ENCODE measurements at regions of chr7 and their contacts with region 1.

Region 1: DNA sequence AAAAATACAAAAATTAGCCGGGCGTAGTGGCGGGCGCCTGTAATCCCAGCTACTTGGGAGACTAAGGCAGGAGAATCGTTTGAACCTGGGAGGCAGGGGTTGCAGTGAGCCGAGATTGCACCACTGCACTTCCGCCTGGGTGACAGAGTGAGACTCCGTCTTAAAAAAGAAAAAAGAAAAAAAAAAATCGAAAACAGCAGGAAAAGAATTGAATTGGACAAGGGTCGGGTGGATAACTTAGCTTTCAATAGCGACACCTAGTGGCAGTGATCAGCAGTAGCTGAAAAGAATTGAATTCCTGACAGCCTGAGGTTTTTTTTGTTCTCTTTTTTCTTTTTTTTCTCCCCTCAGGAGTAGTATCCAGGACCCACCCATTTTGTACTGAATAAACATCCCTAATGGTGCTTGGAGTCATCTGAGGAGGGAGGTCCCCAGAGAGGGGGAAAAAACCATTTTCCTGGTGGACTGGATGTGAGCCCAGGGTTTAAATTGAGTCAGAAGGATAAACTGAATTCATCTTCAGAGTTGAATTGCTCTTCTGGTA is 55.1 kb downstream of the CYCS start:
- DNase-seq: peak; percentile 73 to 76
- H3K4me3 ChIP-seq: peak overlapping the region; percentile 20
- H3K4me3 Mint-ChIP-seq: peak overlapping the region; percentile 62
- H3K27ac Mint-ChIP-seq: no peak overlapping the region
- H3K4me1 ChIP-seq: peaks cover 4% of the 10 kb centered on the region; the same call in 1 of the 2 replicates
- H3K4me1 Mint-ChIP-seq: peaks cover 10% of the 10 kb centered on the region
- H3K27me3 ChIP-seq: no peaks in the 10 kb centered on the region
- H3K27me3 Mint-ChIP-seq: no peaks in the 10 kb centered on the region
- CTCF ChIP-seq: peak; percentile 82 to 90

Region 2: GRCh38 chr7:24896031-24896501 is 173.9 kb before region 1 on chr7:
- CTCF ChIA-PET with region 1: interaction called, 3 read pairs
- POLR2A ChIA-PET with region 1: no interaction called
- intact Hi-C with region 1: loop called (anchors 1 kb)
- DNase-seq: no peak
- H3K4me3 ChIP-seq: no peak overlapping the region
- H3K4me3 Mint-ChIP-seq: no peak overlapping the region
- H3K27ac Mint-ChIP-seq: no peak overlapping the region
- H3K4me1 ChIP-seq: peaks cover under 1% of the 10 kb centered on the region; the same call in 1 of the 2 replicates
- H3K4me1 Mint-ChIP-seq: no peaks in the 10 kb centered on the region
- H3K27me3 ChIP-seq: no peaks in the 10 kb centered on the region
- H3K27me3 Mint-ChIP-seq: no peaks in the 10 kb centered on the region
- CTCF ChIP-seq: no peak

Region 3: GRCh38 chr7:24979863-24980533 is 90.0 kb before region 1 on chr7 and contains the start of gene OSBPL3:
- CTCF ChIA-PET with region 1: interaction called, 7 read pairs
- POLR2A ChIA-PET with region 1: interaction called, 4 read pairs
- intact Hi-C with region 1: loop called (anchors 1 kb)
- DNase-seq: peak; percentile 97
- H3K4me3 ChIP-seq: peak within 1 kb of the TSS; percentile 78
- H3K4me3 Mint-ChIP-seq: peak within 1 kb of the TSS; percentile 85
- H3K27ac Mint-ChIP-seq: peak within 1 kb of the TSS; percentile 96
- H3K4me1 ChIP-seq: peaks cover 23% of the 10 kb centered on the region
- H3K4me1 Mint-ChIP-seq: peaks cover 13% of the 10 kb centered on the region
- H3K27me3 ChIP-seq: no peaks in the 10 kb centered on the region
- H3K27me3 Mint-ChIP-seq: no peaks in the 10 kb centered on the region
- CTCF ChIP-seq: no peak
- total RNA-seq, gene OSBPL3: 43.9 and 45.1 TPM in 2 replicates

Region 4: DNA sequence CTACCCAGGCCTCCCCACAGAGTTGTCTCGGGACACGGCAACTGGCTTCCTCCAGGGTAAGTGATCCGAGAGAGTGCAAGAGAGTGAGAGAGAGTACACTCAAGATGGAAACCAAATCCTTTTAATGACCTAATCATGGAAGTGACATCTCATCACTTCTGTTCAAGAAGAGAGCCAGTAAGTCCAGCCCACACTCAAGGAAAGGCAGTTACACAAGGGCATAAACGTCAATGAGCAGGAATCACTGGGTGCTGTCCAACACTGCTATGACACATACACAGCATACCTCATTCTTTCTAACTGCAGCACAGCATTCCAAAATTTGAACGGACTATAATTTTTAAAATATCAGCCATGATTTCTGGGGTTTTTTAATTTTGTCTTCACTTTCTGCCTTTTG is 60.7 kb before region 1 on chr7:
- CTCF ChIA-PET with region 1: no interaction called
- POLR2A ChIA-PET with region 1: no interaction called
- intact Hi-C with region 1: no loop called
- DNase-seq: no peak
- H3K4me3 ChIP-seq: no peak overlapping the region
- H3K4me3 Mint-ChIP-seq: no peak overlapping the region
- H3K27ac Mint-ChIP-seq: no peak overlapping the region
- H3K4me1 ChIP-seq: no peaks in the 10 kb centered on the region
- H3K4me1 Mint-ChIP-seq: no peaks in the 10 kb centered on the region
- H3K27me3 ChIP-seq: no peaks in the 10 kb centered on the region
- H3K27me3 Mint-ChIP-seq: no peaks in the 10 kb centered on the region
- CTCF ChIP-seq: no peak

Region 5: GRCh38 chr7:25028370-25029021 is 41.5 kb before region 1 on chr7:
- CTCF ChIA-PET with region 1: no interaction called
- POLR2A ChIA-PET with region 1: no interaction called
- intact Hi-C with region 1: loop called (anchors 1 kb)
- DNase-seq: peak; percentile 46 to 66
- H3K4me3 ChIP-seq: no peak overlapping the region
- H3K4me3 Mint-ChIP-seq: peak overlapping the region; percentile 54
- H3K27ac Mint-ChIP-seq: peak overlapping the region; percentile 92
- H3K4me1 ChIP-seq: peaks cover 60% of the 10 kb centered on the region
- H3K4me1 Mint-ChIP-seq: peaks cover 67% of the 10 kb centered on the region
- H3K27me3 ChIP-seq: no peaks in the 10 kb centered on the region
- H3K27me3 Mint-ChIP-seq: no peaks in the 10 kb centered on the region
- CTCF ChIP-seq: no peak